Esophagus muscularis mucosa (tissue), 4 donors: ENCODE measurements at regions of chr2 and their contacts with region 1.

Region 1: GRCh38 chr2:96174251-96175144 is 29.3 kb upstream of the DUSP2 start:
- DNase-seq: no peak
- H3K4me3 ChIP-seq: no peak overlapping the region
- H3K27ac ChIP-seq: no peak overlapping the region
- H3K4me1 ChIP-seq: peaks cover 0 to 7% (median 0%) of the 10 kb centered on the region in 4 donors
- H3K27me3 ChIP-seq: no peaks in the 10 kb centered on the region
- CTCF ChIP-seq: peak; percentile 75 to 91 (median 83)
- EP300 ChIP-seq: no peak
- POLR2A ChIP-seq: no peak

Region 2: GRCh38 chr2:95278637-95279225 is 895.8 kb before region 1 on chr2:
- intact Hi-C with region 1: no loop called
- DNase-seq: no peak
- H3K4me3 ChIP-seq: no peak overlapping the region
- H3K27ac ChIP-seq: no peak overlapping the region
- H3K4me1 ChIP-seq: no peaks in the 10 kb centered on the region
- H3K27me3 ChIP-seq: no peaks in the 10 kb centered on the region
- CTCF ChIP-seq: no peak
- EP300 ChIP-seq: no peak
- POLR2A ChIP-seq: no peak

Region 3: GRCh38 chr2:96024336-96025193 is 149.9 kb before region 1 on chr2:
- intact Hi-C with region 1: loop called (anchors 10 kb)
- DNase-seq: no peak
- H3K4me3 ChIP-seq: no peak overlapping the region
- H3K27ac ChIP-seq: no peak overlapping the region
- H3K4me1 ChIP-seq: peaks cover 0 to 5% (median 0%) of the 10 kb centered on the region in 4 donors
- H3K27me3 ChIP-seq: no peaks in the 10 kb centered on the region
- CTCF ChIP-seq: no peak
- EP300 ChIP-seq: no peak
- POLR2A ChIP-seq: no peak

Region 4: GRCh38 chr2:96138179-96139145 is 36.0 kb before region 1 on chr2 and contains the start of gene ASTL:
- intact Hi-C with region 1: loop called (anchors 2 kb)
- DNase-seq: no peak
- H3K4me3 ChIP-seq: no peak within 1 kb of the TSS
- H3K27ac ChIP-seq: no peak within 1 kb of the TSS
- H3K4me1 ChIP-seq: no peaks in the 10 kb centered on the region
- H3K27me3 ChIP-seq: peaks cover 0 to 48% (median 0%) of the 10 kb centered on the region in 4 donors
- CTCF ChIP-seq: peak; percentile 23 to 48 (median 48)
- EP300 ChIP-seq: no peak
- POLR2A ChIP-seq: no peak
- total RNA-seq, gene ASTL: not detected